Heart right ventricle (tissue), 16 donors: ENCODE measurements at regions of chr3 and their contacts with region 1.

Region 1: DNA sequence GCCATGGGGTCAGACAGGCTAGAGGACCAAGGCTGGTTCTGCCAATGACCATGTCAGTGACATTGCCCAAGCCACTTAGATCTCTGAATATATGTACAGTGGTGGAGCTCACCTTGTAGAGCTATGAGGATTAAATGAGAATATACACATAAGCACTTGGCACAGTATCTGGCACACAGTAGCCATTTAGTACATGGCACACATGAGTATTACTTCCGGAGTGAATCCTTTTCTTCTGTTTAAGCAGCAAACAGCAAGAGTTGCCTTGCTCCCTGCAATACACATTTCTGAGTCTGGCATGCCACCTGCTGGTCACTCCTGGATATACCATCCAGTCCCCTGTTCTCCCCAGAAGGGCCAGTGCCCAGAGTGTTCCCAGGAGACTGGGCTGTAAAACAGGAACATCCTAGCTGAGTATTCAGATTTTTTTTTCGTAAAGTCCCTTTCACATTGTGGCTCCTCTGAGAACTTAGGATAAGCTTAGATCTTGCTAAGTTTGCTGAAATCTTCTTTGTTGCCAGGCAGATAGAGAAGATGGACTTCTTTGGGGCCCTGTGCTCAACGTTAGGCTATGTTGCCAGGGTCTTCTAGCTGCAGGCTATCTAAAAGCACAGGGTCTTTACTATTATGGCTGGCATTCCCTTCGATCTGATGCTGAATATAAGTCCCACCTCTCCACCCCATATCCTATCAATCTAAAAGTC is 203.4 kb downstream of the ADAMTS9 start:
- DNase-seq: peak; percentile 73 to 80
- ATAC-seq: peak; percentile 89 to 95 (median 92)
- H3K4me3 ChIP-seq: no peak overlapping the region
- H3K27ac ChIP-seq: no peak overlapping the region
- H3K4me1 ChIP-seq: peaks cover 0 to 18% (median 0%) of the 10 kb centered on the region in 9 donors
- H3K27me3 ChIP-seq: peaks cover 0 to 16% (median 4%) of the 10 kb centered on the region in 7 donors
- CTCF ChIP-seq: peak; percentile 73 to 96 (median 88)

Region 2: DNA sequence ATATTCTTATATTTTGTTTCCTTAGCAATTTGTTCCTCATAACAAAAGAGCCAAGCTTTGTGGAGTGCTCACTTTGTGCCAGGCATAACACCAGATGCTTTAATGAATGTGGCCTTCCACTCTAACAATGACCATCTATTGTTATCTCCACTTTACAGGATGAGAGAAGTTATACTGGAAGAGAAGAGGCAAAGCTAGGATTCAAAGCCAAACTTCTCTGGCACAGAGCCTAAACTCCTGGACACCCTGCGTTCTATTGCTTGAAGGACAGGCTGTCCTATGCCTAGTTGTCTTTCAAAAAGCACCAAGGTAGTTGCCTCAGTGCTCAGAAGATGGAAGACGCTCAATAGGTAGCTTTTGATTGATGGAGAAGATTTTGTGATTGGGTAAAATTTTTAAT is 1987.9 kb before region 1 on chr3:
- intact Hi-C with region 1: loop called in 1 of 10 experiments (anchors 5 kb)
- DNase-seq: peak in 1 of 2 donors; percentile 12
- ATAC-seq: peak in 2 of 8 donors; percentile 58 to 88
- H3K4me3 ChIP-seq: no peak overlapping the region
- H3K27ac ChIP-seq: no peak overlapping the region
- H3K4me1 ChIP-seq: no peaks in the 10 kb centered on the region
- H3K27me3 ChIP-seq: no peaks in the 10 kb centered on the region
- CTCF ChIP-seq: no peak

Region 3: GRCh38 chr3:63349583-63350521 is 1134.6 kb before region 1 on chr3:
- intact Hi-C with region 1: loop called in 1 of 10 experiments (anchors 10 kb)
- DNase-seq: peak in 1 of 2 donors; percentile 14
- ATAC-seq: peak in 1 of 8 donors; percentile 49
- H3K4me3 ChIP-seq: no peak overlapping the region
- H3K27ac ChIP-seq: no peak overlapping the region
- H3K4me1 ChIP-seq: peaks cover 0 to 3% (median 0%) of the 10 kb centered on the region in 9 donors
- H3K27me3 ChIP-seq: peaks cover 0 to 45% (median 22%) of the 10 kb centered on the region in 7 donors
- CTCF ChIP-seq: peak; percentile 34 to 80 (median 72)

Region 4: GRCh38 chr3:64023187-64023848 is 461.1 kb before region 1 on chr3 and contains the start of gene PSMD6:
- intact Hi-C with region 1: loop called in 2 of 10 experiments (anchors 2 kb)
- DNase-seq: peak; percentile 88 to 92
- ATAC-seq: peak; percentile 94 to 97 (median 96)
- H3K4me3 ChIP-seq: peak within 1 kb of the TSS; percentile 53 to 97 (median 90)
- H3K27ac ChIP-seq: peak within 1 kb of the TSS; percentile 54 to 93 (median 86)
- H3K4me1 ChIP-seq: peaks cover 0 to 34% (median 22%) of the 10 kb centered on the region in 9 donors
- H3K27me3 ChIP-seq: peaks cover 0 to 5% (median 0%) of the 10 kb centered on the region in 7 donors
- CTCF ChIP-seq: peak; percentile 99 to 100 (median 100)
- total RNA-seq, gene PSMD6: 76.6 to 103 (median 87.5) TPM

Region 5: DNA sequence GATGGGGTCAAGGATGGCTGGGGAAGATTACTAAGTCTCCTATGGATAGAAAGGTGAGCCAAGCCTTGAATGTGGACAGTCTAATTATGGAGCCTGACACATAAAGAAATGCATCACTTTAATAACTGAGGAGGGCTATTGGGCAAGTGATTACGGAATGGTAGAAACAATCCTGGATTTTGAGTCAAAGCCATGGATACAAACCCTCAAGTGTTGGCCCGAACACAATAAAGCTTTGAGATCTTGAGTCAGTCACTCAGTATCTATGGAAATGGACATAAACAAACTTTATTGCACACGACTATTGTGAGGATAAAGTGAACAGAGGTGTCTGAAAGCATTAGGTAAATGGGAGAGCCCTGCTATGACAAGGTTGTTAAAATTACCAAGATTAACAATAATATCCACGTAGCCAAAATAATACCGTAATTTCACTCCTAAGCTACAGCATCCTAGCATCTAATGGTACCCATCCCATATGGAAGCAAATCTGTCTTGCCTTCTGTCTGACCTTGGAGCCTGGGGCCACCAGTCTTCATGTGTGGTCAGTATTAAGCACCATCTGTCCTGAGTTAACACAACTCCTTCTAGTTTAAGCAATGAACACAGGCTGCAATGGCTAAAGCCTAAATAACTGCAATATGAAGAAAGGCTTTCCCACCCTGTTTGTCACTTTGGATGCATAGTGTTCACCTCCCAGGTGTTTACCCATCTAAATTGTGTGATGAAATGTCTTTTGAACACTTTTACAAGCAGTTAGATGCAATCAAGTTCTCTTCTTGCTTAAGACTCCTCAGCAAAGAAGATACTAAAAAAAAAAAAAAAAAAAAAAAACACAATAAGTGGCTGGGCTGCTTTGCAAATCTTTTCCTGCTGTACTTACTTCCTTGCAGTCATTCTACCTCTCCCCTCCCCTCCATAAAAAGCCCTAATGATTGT is 122.2 kb before region 1 on chr3:
- intact Hi-C with region 1: no loop called
- DNase-seq: no peak
- ATAC-seq: no peak
- H3K4me3 ChIP-seq: no peak overlapping the region
- H3K27ac ChIP-seq: no peak overlapping the region
- H3K4me1 ChIP-seq: peaks cover 0 to 17% (median 0%) of the 10 kb centered on the region in 9 donors
- H3K27me3 ChIP-seq: no peaks in the 10 kb centered on the region
- CTCF ChIP-seq: no peak

Region 6: DNA sequence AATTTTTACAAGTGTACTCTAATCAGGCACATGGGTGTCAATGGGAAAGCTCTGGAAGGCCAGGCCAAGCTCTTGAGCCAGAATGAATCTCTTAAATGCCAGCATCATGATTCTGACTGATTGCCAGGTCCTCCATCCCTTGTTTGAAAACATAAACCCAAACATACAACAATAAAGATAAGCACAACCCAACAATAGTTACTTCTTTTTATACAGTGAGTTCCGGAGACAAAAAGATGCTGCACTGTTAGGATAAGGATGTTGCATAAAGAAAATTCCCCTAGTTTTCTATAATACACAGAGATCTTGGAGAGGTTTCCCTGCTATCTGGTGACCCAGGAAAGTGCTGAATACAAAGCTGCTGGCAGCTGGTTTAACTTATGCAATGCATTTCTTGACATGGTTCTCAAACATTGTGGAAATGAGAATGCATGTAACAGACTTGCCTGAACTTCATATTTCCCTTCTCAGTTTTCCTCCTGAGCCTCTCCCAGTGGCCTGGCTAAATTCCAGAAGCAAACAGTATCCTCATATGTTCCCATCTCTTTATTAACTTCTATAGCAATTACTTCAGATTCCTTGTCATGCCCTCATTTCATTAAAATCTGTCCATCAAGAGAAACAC is 79.1 kb before region 1 on chr3:
- intact Hi-C with region 1: loop called in 4 of 10 experiments (anchors 2 to 10 kb)
- DNase-seq: no peak
- ATAC-seq: no peak
- H3K4me3 ChIP-seq: no peak overlapping the region
- H3K27ac ChIP-seq: no peak overlapping the region
- H3K4me1 ChIP-seq: no peaks in the 10 kb centered on the region
- H3K27me3 ChIP-seq: peaks cover 0 to 5% (median 0%) of the 10 kb centered on the region in 7 donors
- CTCF ChIP-seq: no peak

Region 7: DNA sequence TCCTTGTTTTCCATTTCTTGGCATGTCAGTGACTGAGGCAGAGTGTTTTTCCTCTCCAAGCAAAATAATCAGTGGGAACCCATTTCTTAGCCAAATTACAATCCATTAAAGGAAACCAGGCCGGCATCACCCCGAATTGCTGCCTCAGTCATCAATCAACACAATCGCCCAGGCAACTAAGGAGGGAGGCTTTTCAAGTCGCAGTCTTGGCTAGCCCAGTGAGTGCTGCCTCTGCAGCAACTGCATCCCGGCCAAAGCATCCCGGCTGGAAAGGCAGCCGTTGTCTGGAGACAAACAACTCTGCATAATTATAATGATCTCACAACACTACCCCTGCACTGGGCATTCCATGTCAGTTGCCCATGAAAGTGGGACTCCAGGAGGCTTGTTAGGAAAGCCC is 45.6 kb before region 1 on chr3:
- intact Hi-C with region 1: no loop called
- DNase-seq: no peak
- ATAC-seq: no peak
- H3K4me3 ChIP-seq: no peak overlapping the region
- H3K27ac ChIP-seq: no peak overlapping the region
- H3K4me1 ChIP-seq: peaks cover 0 to 17% (median 1%) of the 10 kb centered on the region in 9 donors
- H3K27me3 ChIP-seq: peaks cover 0 to 55% (median 36%) of the 10 kb centered on the region in 7 donors
- CTCF ChIP-seq: no peak